Activated CD4-positive, alpha-beta memory T cell treated with anti-CD3 and anti-CD28 coated beads, Interleukin-2, amount 10 ng/mL, durations not matched to agents 7 days and 5 days (primary cell): ENCODE measurements at regions of chr10 and their contacts with region 1.

Region 1: GRCh38 chr10:95693668-95694534 is at the start of gene TCTN3:
- DNase-seq: peak; percentile 97
- H3K4me3 Mint-ChIP-seq: peak within 1 kb of the TSS; percentile 91
- H3K27ac Mint-ChIP-seq: peak within 1 kb of the TSS; percentile 84
- H3K4me1 Mint-ChIP-seq: peaks cover 44% of the 10 kb centered on the region
- H3K27me3 Mint-ChIP-seq: no peaks in the 10 kb centered on the region
- total RNA-seq, gene TCTN3: 26.2 to 28.5 TPM

Region 2: GRCh38 chr10:95374597-95375209 is 319.2 kb before region 1 on chr10:
- CTCF ChIA-PET with region 1: interaction called, 10 read pairs
- POLR2A ChIA-PET with region 1: no interaction called
- DNase-seq: peak; percentile 76
- H3K4me3 Mint-ChIP-seq: no peak overlapping the region
- H3K27ac Mint-ChIP-seq: no peak overlapping the region
- H3K4me1 Mint-ChIP-seq: peaks cover 5% of the 10 kb centered on the region
- H3K27me3 Mint-ChIP-seq: peaks cover 32% of the 10 kb centered on the region

Region 3: DNA sequence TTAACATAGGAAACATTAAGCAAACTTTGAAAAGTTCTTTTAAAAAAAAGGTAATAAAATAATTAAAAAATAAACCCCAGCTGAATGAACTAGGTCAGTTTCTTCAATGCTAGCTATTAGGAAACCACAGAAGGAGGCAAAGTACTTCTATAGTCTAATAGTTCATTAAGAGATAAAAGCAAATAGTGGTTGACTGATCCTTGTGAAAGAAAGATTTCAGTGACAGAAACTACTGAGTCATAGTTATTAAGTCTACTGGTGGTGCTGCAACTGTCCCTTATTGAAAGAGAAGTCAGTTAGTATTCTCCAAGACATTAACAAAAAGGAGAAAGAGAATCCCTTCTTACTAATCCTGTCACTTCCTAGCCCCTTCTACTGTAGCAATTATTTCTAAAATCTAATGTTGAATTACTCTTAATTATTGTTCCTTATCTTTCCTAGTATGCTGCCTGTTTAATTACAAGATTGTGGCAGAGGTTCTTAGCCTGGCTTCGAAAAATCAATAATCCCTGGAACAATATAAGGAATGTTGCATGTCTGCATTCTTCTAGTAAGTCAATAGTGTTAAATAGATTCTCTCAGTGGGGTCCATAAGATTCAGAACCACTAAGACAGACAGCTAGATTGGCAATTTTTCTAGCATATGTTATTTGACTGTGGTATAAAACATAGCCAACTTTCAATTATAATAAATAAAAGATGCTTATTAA is 18.3 kb before region 1 on chr10:
- CTCF ChIA-PET with region 1: interaction called, 38 read pairs
- POLR2A ChIA-PET with region 1: interaction called, 7 read pairs
- DNase-seq: no peak
- H3K4me3 Mint-ChIP-seq: no peak overlapping the region
- H3K27ac Mint-ChIP-seq: no peak overlapping the region
- H3K4me1 Mint-ChIP-seq: no peaks in the 10 kb centered on the region
- H3K27me3 Mint-ChIP-seq: no peaks in the 10 kb centered on the region

Region 4: GRCh38 chr10:95832216-95833041 is 138.5 kb after region 1 on chr10:
- CTCF ChIA-PET with region 1: interaction called, 379 read pairs
- POLR2A ChIA-PET with region 1: interaction called, 35 read pairs
- DNase-seq: peak; percentile 78
- H3K4me3 Mint-ChIP-seq: peak overlapping the region; percentile 76
- H3K27ac Mint-ChIP-seq: peak overlapping the region; percentile 99
- H3K4me1 Mint-ChIP-seq: peaks cover 75% of the 10 kb centered on the region
- H3K27me3 Mint-ChIP-seq: no peaks in the 10 kb centered on the region

Region 5: GRCh38 chr10:95873651-95874050 is 179.8 kb after region 1 on chr10:
- CTCF ChIA-PET with region 1: interaction called, 43 read pairs
- POLR2A ChIA-PET with region 1: interaction called, 3 read pairs
- DNase-seq: no peak
- H3K4me3 Mint-ChIP-seq: no peak overlapping the region
- H3K27ac Mint-ChIP-seq: no peak overlapping the region
- H3K4me1 Mint-ChIP-seq: peaks cover 5% of the 10 kb centered on the region
- H3K27me3 Mint-ChIP-seq: no peaks in the 10 kb centered on the region

Region 6: GRCh38 chr10:95963226-95963990 is 269.5 kb after region 1 on chr10:
- CTCF ChIA-PET with region 1: interaction called, 18 read pairs
- POLR2A ChIA-PET with region 1: no interaction called
- DNase-seq: no peak
- H3K4me3 Mint-ChIP-seq: peak overlapping the region; percentile 12
- H3K27ac Mint-ChIP-seq: peak overlapping the region; percentile 88
- H3K4me1 Mint-ChIP-seq: peaks cover 23% of the 10 kb centered on the region
- H3K27me3 Mint-ChIP-seq: peaks cover 3% of the 10 kb centered on the region